ENCODE measurements at regions of chr10 and their contacts with region 1.

Region 1: GRCh38 chr10:834493-834892 is 97.0 kb downstream of the LARP4B start:
- DNase-seq: no peak
- ATAC-seq: no peak
- H3K4me3 ChIP-seq: no peak overlapping the region
- H3K4me3 Mint-ChIP-seq: no peak overlapping the region
- H3K27ac ChIP-seq: no peak overlapping the region
- H3K27ac Mint-ChIP-seq: no peak overlapping the region
- H3K4me1 ChIP-seq: no peaks in the 10 kb centered on the region
- H3K4me1 Mint-ChIP-seq: no peaks in the 10 kb centered on the region
- H3K27me3 ChIP-seq: no peaks in the 10 kb centered on the region
- H3K27me3 Mint-ChIP-seq: no peaks in the 10 kb centered on the region
- CTCF ChIP-seq: no peak

Region 2: GRCh38 chr10:851901-852300 is 17.4 kb after region 1 on chr10:
- CTCF ChIA-PET with region 1: no interaction called
- POLR2A ChIA-PET with region 1: no interaction called
- intact Hi-C with region 1: loop called (anchors 2 kb)
- DNase-seq: peak; percentile 81
- ATAC-seq: peak; percentile 83
- H3K4me3 ChIP-seq: peak overlapping the region in 2 of 5 experiments; percentile 22 to 33
- H3K4me3 Mint-ChIP-seq: peak overlapping the region; percentile 59
- H3K27ac ChIP-seq: peak overlapping the region; percentile 62 to 85
- H3K27ac Mint-ChIP-seq: peak overlapping the region; percentile 80
- H3K4me1 ChIP-seq: peaks cover 18 to 22% of the 10 kb centered on the region in 2 donors
- H3K4me1 Mint-ChIP-seq: peaks cover 49% of the 10 kb centered on the region
- H3K27me3 ChIP-seq: no peaks in the 10 kb centered on the region
- H3K27me3 Mint-ChIP-seq: no peaks in the 10 kb centered on the region
- CTCF ChIP-seq: no peak

Region 3: DNA sequence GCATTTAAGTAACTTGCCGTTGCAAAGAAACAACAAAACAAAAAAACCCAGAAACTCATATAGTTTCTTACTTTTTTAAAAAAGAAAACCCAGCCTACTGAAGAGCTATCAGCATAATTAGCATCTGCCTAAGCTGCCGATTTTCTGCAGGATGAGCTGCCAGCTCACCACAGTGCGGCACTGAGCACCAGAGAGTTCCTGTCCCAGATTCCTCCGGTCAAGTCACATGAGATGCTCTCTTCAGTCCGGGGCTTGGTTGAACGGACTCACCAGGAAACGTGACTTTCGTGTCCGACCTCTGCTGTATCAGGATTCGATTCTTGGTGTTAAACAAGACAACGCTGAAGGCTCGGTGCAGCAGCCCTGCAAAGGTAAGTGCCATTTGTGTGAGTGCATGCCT is 187.9 kb after region 1 on chr10:
- CTCF ChIA-PET with region 1: no interaction called
- POLR2A ChIA-PET with region 1: no interaction called
- intact Hi-C with region 1: no loop called
- DNase-seq: no peak
- ATAC-seq: no peak
- H3K4me3 ChIP-seq: no peak overlapping the region
- H3K4me3 Mint-ChIP-seq: no peak overlapping the region
- H3K27ac ChIP-seq: no peak overlapping the region
- H3K27ac Mint-ChIP-seq: no peak overlapping the region
- H3K4me1 ChIP-seq: no peaks in the 10 kb centered on the region
- H3K4me1 Mint-ChIP-seq: no peaks in the 10 kb centered on the region
- H3K27me3 ChIP-seq: no peaks in the 10 kb centered on the region
- H3K27me3 Mint-ChIP-seq: no peaks in the 10 kb centered on the region
- CTCF ChIP-seq: no peak

Measured in B cell (primary cell).